Calu3 (cell line): ENCODE measurements at regions of chr4 and their contacts with region 1.

Region 1: GRCh38 chr4:157045507-157046127 is 30.3 kb upstream of the GLRB start:
- DNase-seq: peak; percentile 43
- H3K4me3 Mint-ChIP-seq: no peak overlapping the region
- H3K27ac Mint-ChIP-seq: no peak overlapping the region
- H3K4me1 Mint-ChIP-seq: peaks cover 23% of the 10 kb centered on the region
- H3K27me3 Mint-ChIP-seq: no peaks in the 10 kb centered on the region
- CTCF ChIP-seq: peak; percentile 25

Region 2: GRCh38 chr4:156771171-156771837 is 274.3 kb before region 1 on chr4:
- CTCF ChIA-PET with region 1: no interaction called
- intact Hi-C with region 1: loop called (anchors 10 kb)
- DNase-seq: peak; percentile 41
- H3K4me3 Mint-ChIP-seq: peak overlapping the region; percentile 24
- H3K27ac Mint-ChIP-seq: peak overlapping the region; percentile 74
- H3K4me1 Mint-ChIP-seq: peaks cover 21% of the 10 kb centered on the region
- H3K27me3 Mint-ChIP-seq: no peaks in the 10 kb centered on the region
- CTCF ChIP-seq: no peak

Region 3: GRCh38 chr4:156858071-156858470 is 187.5 kb before region 1 on chr4:
- CTCF ChIA-PET with region 1: no interaction called
- intact Hi-C with region 1: no loop called
- DNase-seq: no peak
- H3K4me3 Mint-ChIP-seq: no peak overlapping the region
- H3K27ac Mint-ChIP-seq: no peak overlapping the region
- H3K4me1 Mint-ChIP-seq: no peaks in the 10 kb centered on the region
- H3K27me3 Mint-ChIP-seq: no peaks in the 10 kb centered on the region
- CTCF ChIP-seq: no peak

Region 4: DNA sequence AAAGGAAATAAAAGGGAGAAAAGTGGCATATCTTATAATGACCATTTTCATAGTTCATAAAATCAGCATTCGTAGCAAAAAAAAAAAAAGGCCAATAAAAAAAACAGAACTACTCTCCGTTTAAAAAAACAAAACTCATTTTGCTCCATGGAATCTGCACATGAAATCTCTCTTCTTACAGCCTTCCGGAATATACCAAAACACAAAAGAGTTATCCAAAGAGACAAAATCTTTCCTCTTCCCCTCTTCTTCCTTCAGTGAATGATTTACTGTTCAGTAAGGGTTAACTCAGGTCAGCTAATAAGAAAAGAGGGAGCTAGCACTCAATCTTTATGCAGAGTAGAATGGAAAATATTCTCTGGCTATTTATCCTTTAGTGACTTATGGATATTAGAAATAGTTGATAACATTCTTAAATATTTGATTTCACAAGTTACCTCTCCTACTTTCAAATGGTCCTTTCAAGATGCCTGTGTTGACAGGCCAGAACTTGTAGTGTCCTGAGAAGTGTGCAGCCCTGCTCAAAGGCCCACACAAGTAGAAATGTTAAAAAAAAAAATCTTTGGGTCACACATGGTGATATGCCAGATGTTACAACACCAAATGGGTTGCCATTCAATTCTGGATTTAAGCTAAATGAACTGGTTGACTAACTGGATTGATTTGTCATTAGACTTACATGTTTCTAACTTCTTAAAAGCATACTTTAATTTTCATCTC is 116.1 kb before region 1 on chr4:
- CTCF ChIA-PET with region 1: no interaction called
- intact Hi-C with region 1: no loop called
- DNase-seq: no peak
- H3K4me3 Mint-ChIP-seq: no peak overlapping the region
- H3K27ac Mint-ChIP-seq: peak overlapping the region; percentile 52
- H3K4me1 Mint-ChIP-seq: peaks cover 21% of the 10 kb centered on the region
- H3K27me3 Mint-ChIP-seq: no peaks in the 10 kb centered on the region
- CTCF ChIP-seq: no peak

Region 5: DNA sequence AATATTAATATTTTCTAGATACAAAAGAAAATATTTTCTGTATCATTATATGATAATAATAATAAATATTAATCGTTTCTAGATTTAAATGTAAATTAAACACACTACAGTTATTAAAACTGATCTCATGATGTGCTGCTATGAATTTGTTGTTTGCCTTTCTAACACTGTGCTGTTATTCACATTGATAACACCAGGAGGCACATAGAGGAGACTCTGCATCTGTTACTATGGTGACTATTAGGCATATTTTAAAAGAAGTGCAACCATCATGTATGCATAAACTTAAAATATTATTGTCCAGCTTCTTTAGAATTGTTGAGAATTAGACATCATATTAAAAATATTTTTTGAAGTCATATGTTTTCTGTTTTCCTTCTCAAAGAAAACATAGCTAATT is 62.3 kb before region 1 on chr4:
- CTCF ChIA-PET with region 1: interaction called, 4 read pairs
- intact Hi-C with region 1: loop called (anchors 1 kb)
- DNase-seq: no peak
- H3K4me3 Mint-ChIP-seq: no peak overlapping the region
- H3K27ac Mint-ChIP-seq: no peak overlapping the region
- H3K4me1 Mint-ChIP-seq: no peaks in the 10 kb centered on the region
- H3K27me3 Mint-ChIP-seq: no peaks in the 10 kb centered on the region
- CTCF ChIP-seq: peak; percentile 22

Region 6: DNA sequence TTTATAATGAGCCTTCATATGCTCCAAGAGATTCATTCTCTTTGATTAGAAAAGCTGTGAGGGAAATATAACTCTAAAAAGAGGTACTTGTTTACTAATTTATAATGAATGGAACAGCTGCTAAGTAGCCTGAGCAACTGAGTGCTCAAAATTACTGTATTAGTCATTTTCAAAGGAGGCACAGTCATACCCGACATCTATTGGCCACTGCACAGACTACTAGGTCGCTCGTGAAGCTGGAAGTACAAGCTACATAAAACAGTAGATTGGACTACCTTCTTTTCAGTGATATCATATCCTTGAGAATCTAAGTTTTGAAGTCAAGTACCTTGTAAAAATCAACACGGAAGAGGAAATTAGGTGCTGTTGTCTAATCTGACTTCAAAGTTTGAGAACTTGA is 21.7 kb before region 1 on chr4:
- CTCF ChIA-PET with region 1: no interaction called
- intact Hi-C with region 1: no loop called
- DNase-seq: no peak
- H3K4me3 Mint-ChIP-seq: no peak overlapping the region
- H3K27ac Mint-ChIP-seq: no peak overlapping the region
- H3K4me1 Mint-ChIP-seq: no peaks in the 10 kb centered on the region
- H3K27me3 Mint-ChIP-seq: no peaks in the 10 kb centered on the region
- CTCF ChIP-seq: no peak

Region 7: DNA sequence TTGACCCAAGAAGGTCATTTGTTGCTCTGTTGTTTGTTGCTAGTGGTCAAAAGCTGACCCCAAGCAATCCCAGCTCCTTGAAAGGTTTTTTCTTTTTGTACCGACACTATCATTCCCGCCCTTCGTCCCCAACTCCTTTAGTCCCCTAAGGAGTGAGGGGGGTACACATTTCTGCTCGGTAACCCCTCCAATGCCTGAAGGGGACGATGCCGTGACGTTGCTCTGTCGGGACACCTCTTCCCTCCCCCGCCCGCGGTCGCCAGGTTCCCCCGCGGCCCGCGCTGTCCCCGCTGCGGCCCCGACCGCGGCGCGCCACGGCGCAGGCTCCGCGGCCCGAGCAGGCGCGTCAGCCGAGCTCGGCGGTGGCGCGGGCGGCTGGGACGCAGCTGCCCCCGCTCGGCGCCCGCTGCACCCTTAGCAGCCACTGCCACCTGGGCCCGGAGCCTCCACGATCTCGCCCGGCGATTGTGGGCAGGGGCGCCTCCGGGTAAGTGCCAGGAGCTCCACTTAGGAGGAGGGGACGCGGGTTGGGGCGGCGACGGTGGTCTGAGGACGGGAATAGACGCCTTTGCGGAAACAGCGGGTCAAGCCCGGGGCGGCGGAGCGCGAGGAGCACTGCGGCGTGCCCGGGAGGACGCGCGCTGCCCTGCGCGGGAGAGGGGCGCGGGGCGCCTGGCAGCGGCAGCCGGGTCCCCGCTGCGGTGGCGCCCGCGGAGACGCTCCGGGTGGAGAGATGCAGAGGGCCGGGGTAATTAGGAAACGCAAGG is 30.4 kb after region 1 on chr4 and contains the start of gene GLRB:
- CTCF ChIA-PET with region 1: no interaction called
- intact Hi-C with region 1: no loop called
- DNase-seq: peak; percentile 27
- H3K4me3 Mint-ChIP-seq: peak within 1 kb of the TSS; percentile 95
- H3K27ac Mint-ChIP-seq: peak within 1 kb of the TSS; percentile 71
- H3K4me1 Mint-ChIP-seq: peaks cover 22% of the 10 kb centered on the region
- H3K27me3 Mint-ChIP-seq: no peaks in the 10 kb centered on the region
- CTCF ChIP-seq: no peak
- total RNA-seq, gene GLRB: 7.6 and 9.1 TPM in 2 replicates

Region 8: GRCh38 chr4:157128395-157128794 is 82.8 kb after region 1 on chr4:
- CTCF ChIA-PET with region 1: no interaction called
- intact Hi-C with region 1: loop called (anchors 5 kb)
- DNase-seq: peak; percentile 31
- H3K4me3 Mint-ChIP-seq: no peak overlapping the region
- H3K27ac Mint-ChIP-seq: no peak overlapping the region
- H3K4me1 Mint-ChIP-seq: no peaks in the 10 kb centered on the region
- H3K27me3 Mint-ChIP-seq: no peaks in the 10 kb centered on the region
- CTCF ChIP-seq: no peak

Region 9: GRCh38 chr4:157978680-157979361 is 933.2 kb after region 1 on chr4:
- CTCF ChIA-PET with region 1: no interaction called
- intact Hi-C with region 1: loop called (anchors 5 kb)
- DNase-seq: peak; percentile 29
- H3K4me3 Mint-ChIP-seq: peak overlapping the region; percentile 59
- H3K27ac Mint-ChIP-seq: peak overlapping the region; percentile 90
- H3K4me1 Mint-ChIP-seq: no peaks in the 10 kb centered on the region
- H3K27me3 Mint-ChIP-seq: no peaks in the 10 kb centered on the region
- CTCF ChIP-seq: peak; percentile 57